Ascending aorta (tissue), 2 donors: ENCODE measurements at regions of chr16 and their contacts with region 1.

Region 1: GRCh38 chr16:3059000-3059722 is 6.3 kb upstream of the IL32 start:
- DNase-seq: peak; percentile 39 to 92
- H3K4me3 ChIP-seq: peak overlapping the region; percentile 72 to 76
- H3K27ac ChIP-seq: peak overlapping the region; percentile 12 to 42
- H3K4me1 ChIP-seq: peaks cover 5 to 12% of the 10 kb centered on the region in 2 donors
- H3K27me3 ChIP-seq: no peaks in the 10 kb centered on the region
- CTCF ChIP-seq: peak; percentile 77 to 98 (median 86)

Region 2: DNA sequence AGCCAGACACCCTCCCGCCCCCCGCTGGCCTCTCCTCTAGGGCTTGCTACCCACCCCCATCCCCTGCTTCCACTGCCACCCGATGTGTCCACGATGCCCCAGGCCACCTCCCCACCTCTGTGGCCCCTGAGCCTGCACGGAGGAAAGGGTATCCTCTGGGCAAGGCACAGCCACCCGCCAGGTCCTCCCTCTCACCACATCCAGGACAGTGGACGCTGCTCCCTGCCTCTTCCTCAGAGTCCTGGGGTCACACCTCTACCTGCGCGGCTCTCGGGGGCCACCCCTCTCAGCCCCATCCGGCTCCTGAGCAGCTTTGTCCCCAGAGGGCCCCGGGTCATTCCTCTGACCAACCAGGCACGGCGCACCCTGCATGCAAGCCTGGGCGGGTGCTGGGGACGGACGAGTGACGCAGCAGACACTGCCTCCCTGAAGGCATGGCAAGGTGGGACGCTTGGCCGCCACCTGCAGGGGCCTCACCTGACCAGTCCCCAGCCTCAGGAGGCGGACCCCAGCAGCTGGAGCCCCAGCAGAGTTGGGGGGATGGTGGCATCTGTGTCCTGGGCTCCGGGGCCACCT is 122.6 kb before region 1 on chr16:
- intact Hi-C with region 1: no loop called
- DNase-seq: no peak
- H3K4me3 ChIP-seq: no peak overlapping the region
- H3K27ac ChIP-seq: no peak overlapping the region
- H3K4me1 ChIP-seq: no peaks in the 10 kb centered on the region
- H3K27me3 ChIP-seq: no peaks in the 10 kb centered on the region
- CTCF ChIP-seq: no peak

Region 3: GRCh38 chr16:3099732-3100499 is 40.8 kb after region 1 on chr16:
- intact Hi-C with region 1: loop called (anchors 5 kb)
- DNase-seq: peak; percentile 59 to 93
- H3K4me3 ChIP-seq: peak overlapping the region; percentile 26 to 38
- H3K27ac ChIP-seq: no peak overlapping the region
- H3K4me1 ChIP-seq: peaks cover 0 to 6% of the 10 kb centered on the region in 2 donors
- H3K27me3 ChIP-seq: no peaks in the 10 kb centered on the region
- CTCF ChIP-seq: no peak

Region 4: DNA sequence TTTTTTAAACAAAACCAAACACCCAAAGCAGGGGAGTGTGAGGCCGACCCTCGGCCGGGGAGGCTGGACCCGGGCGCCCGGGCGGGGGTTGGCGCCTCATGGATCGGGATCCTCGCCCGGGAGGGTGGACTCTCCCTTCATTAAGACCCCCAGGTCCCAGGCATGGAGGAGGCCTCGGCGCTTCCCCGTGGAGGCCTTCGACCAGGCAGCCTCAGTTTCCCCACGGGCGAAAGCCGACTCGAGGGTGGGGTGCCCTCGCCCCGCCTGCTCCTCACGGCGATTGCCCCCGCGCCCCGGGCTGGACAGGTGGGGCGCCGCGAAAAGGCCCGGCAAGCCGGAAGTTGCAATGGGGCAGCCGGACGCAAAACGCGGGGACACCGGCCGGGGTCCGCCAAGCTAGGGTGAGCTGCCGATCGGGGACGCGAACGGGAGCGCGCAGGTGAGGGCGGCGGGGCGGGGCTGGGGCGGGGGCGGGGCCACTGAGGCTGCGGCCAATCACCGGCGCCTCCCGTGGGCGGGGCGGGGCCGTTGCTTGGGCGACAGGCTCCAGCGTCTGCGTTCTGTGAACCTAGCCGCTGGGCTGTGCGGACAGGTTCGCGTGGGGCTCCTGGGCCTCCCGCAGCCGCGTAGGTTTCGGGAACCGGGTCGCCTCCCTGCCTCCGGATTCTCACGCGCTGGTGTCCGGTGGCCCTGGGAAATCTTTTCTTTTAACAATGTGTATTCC is 47.2 kb after region 1 on chr16:
- intact Hi-C with region 1: loop called (anchors 1 kb)
- DNase-seq: peak; percentile 63 to 96
- H3K4me3 ChIP-seq: peak overlapping the region; percentile 58 to 73
- H3K27ac ChIP-seq: peak overlapping the region; percentile 46 to 48
- H3K4me1 ChIP-seq: peaks cover 4 to 5% of the 10 kb centered on the region in 2 donors
- H3K27me3 ChIP-seq: no peaks in the 10 kb centered on the region
- CTCF ChIP-seq: no peak

Region 5: GRCh38 chr16:3123986-3124886 is 65.1 kb after region 1 on chr16:
- intact Hi-C with region 1: loop called (anchors 1 kb)
- DNase-seq: peak; percentile 88 to 98
- H3K4me3 ChIP-seq: peak overlapping the region; percentile 66 to 92
- H3K27ac ChIP-seq: peak overlapping the region; percentile 75 to 85
- H3K4me1 ChIP-seq: peaks cover 13 to 18% of the 10 kb centered on the region in 2 donors
- H3K27me3 ChIP-seq: no peaks in the 10 kb centered on the region
- CTCF ChIP-seq: peak in 2 of 3 experiments; percentile 6 to 28

Region 6: DNA sequence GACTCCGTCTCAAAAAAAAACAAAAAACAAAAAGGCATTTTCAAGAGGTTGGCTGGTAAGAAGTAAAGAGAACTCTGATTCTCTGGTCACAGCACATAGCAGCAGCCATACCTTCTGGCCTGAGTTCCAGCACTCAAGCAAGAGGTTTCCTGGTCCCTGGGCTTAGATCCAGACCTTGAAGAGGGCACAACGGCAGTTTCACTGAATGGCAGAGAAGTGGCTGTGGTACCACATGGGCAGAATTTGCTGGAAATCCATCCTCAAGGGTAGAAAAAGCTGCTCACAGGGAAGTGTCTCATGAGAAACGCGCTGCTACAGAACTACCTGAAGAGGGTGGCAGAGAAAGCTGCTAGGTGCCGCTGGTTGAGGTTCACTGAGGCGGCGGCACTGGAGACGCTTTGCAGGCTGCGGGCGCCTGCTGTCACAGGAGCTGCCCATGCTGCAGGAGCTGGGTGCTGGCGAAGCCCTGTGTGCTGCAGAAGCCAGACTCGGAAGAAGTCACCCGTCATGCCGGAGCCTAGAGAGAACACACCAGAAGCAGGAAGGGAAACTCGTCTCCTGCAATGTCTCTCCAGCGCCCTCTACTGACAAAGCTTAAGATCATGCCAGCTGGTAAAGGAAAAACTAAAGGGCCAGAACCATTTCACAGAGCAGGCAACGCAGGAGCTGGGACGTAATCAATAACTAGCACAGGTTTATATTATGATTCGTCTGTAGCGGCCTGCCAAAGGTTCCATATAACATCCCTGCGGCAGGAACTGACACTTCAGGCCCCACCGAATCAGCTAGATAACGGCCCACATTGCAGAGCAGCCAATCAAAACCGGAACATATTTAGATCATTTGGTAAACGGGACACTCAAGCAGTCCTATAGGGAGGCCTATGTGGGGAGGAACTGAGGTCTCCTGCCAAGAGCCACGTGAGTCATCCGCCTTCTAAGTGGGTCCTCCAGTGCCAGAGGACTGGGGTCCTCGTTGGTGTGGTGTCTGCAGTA is 70.3 kb after region 1 on chr16:
- intact Hi-C with region 1: loop called (anchors 1 kb)
- DNase-seq: peak in 1 of 2 donors; percentile 87
- H3K4me3 ChIP-seq: peak overlapping the region; percentile 45 to 68
- H3K27ac ChIP-seq: peak overlapping the region; percentile 60 to 70
- H3K4me1 ChIP-seq: peaks cover 18 to 29% of the 10 kb centered on the region in 2 donors
- H3K27me3 ChIP-seq: no peaks in the 10 kb centered on the region
- CTCF ChIP-seq: peak; percentile 84 to 96 (median 88)

Region 7: DNA sequence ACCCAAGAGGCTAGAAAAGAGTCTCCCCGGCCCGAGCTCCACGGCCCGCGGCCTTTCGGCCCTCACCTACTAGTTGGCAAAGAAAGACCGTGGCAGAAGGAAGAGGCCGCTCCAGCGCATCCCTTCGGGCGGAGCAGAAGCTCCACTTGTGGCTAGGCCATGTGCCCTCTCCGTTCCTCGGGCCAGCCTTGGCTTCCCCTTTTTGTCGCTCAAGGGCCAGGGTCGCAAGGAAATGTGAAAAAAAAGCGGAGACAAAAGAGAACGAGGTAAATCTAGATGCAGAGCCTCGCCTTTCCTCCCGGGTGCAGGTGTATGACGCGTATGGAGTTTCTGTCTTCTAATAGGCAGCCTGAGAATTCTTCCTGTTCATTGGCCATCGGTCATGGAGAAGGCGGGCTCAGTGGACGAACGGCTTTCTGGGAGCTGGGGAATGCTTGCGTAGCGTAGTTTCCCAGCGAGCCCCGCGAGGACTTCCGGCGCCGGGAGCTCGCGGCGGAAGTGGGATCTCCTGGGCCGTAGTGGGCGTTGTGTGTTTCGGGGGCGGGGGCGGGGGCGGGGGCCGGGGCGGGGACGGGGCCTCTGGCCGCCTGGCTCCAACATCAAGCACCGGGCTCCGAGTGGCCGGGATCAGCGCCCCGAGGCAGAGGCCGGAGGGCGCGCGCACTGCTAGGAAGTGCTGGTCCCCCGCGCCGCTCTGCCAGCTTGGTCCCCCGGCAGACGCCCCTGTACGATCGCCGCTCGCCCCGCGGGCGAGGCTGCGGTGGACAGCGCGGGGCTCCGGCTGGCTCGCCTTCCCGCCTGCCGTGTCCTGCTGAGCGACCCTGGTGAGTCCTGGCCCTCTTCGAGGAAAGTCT is 75.6 kb after region 1 on chr16 and contains the start of gene ZNF213:
- intact Hi-C with region 1: loop called (anchors 1 kb)
- DNase-seq: peak; percentile 96 to 98
- H3K4me3 ChIP-seq: peak within 1 kb of the TSS; percentile 68 to 81
- H3K27ac ChIP-seq: peak within 1 kb of the TSS; percentile 85 to 95
- H3K4me1 ChIP-seq: peaks cover 5 to 21% of the 10 kb centered on the region in 2 donors
- H3K27me3 ChIP-seq: no peaks in the 10 kb centered on the region
- CTCF ChIP-seq: no peak
- total RNA-seq, gene ZNF213: 25.3 TPM

Region 8: DNA sequence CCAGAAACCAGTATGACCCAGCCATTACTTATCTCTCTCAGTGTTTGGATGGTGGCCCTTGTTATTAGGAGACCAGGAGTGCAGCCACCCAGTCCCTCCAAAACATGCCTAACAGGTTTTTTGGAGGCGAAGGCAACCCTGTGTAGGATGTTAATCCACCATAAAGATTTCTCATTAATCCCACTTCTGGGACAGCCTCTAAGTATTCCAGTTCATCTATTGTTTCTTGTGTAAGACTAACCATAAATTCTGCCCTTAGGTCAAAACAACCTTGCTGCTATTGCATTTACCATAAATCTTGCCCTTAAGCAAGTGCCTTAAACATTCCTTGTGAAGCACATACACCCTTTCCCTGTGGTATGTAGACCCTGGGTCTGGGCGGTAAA is 107.3 kb after region 1 on chr16:
- intact Hi-C with region 1: loop called (anchors 1 kb)
- DNase-seq: no peak
- H3K4me3 ChIP-seq: no peak overlapping the region
- H3K27ac ChIP-seq: no peak overlapping the region
- H3K4me1 ChIP-seq: peaks cover 9 to 11% of the 10 kb centered on the region in 2 donors
- H3K27me3 ChIP-seq: no peaks in the 10 kb centered on the region
- CTCF ChIP-seq: no peak